Activated naive CD4-positive, alpha-beta T cell treated with anti-CD3 and anti-CD28 coated beads for 36 hours (primary cell): ENCODE measurements at regions of chr2 and their contacts with region 1.

Region 1: GRCh38 chr2:35973132-35973736 is 382.3 kb upstream of the CRIM1 start:
- DNase-seq: peak; percentile 33
- H3K4me3 Mint-ChIP-seq: no peak overlapping the region
- H3K27ac Mint-ChIP-seq: no peak overlapping the region
- H3K4me1 Mint-ChIP-seq: peaks cover 2% of the 10 kb centered on the region
- H3K27me3 Mint-ChIP-seq: peaks cover 4% of the 10 kb centered on the region

Region 2: DNA sequence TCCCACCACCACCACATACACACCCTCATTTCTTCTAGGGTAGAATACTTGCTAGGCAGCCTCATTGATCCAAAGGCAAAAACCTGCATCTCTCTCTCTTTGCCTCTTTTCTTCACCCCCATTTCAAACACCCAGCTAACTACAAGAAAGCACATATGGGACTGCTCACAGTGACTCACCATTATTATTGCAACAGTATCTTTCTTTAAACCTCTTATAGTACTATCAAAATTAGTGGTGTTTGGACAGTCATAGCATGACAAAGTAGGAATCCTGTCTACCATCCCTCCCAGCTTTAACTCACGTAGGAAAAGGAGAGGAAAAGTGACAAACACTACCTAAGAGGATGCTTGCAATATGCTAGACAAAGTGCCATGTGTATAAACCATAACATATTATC is 40.2 kb before region 1 on chr2:
- CTCF ChIA-PET with region 1: no interaction called
- intact Hi-C with region 1: no loop called
- DNase-seq: no peak
- H3K4me3 Mint-ChIP-seq: no peak overlapping the region
- H3K27ac Mint-ChIP-seq: no peak overlapping the region
- H3K4me1 Mint-ChIP-seq: no peaks in the 10 kb centered on the region
- H3K27me3 Mint-ChIP-seq: peaks cover 15% of the 10 kb centered on the region

Region 3: GRCh38 chr2:36322108-36322507 is 348.9 kb after region 1 on chr2:
- CTCF ChIA-PET with region 1: interaction called, 3 read pairs
- intact Hi-C with region 1: loop called (anchors 1 kb)
- DNase-seq: no peak
- H3K4me3 Mint-ChIP-seq: no peak overlapping the region
- H3K27ac Mint-ChIP-seq: no peak overlapping the region
- H3K4me1 Mint-ChIP-seq: no peaks in the 10 kb centered on the region
- H3K27me3 Mint-ChIP-seq: peaks cover 7% of the 10 kb centered on the region

Region 4: DNA sequence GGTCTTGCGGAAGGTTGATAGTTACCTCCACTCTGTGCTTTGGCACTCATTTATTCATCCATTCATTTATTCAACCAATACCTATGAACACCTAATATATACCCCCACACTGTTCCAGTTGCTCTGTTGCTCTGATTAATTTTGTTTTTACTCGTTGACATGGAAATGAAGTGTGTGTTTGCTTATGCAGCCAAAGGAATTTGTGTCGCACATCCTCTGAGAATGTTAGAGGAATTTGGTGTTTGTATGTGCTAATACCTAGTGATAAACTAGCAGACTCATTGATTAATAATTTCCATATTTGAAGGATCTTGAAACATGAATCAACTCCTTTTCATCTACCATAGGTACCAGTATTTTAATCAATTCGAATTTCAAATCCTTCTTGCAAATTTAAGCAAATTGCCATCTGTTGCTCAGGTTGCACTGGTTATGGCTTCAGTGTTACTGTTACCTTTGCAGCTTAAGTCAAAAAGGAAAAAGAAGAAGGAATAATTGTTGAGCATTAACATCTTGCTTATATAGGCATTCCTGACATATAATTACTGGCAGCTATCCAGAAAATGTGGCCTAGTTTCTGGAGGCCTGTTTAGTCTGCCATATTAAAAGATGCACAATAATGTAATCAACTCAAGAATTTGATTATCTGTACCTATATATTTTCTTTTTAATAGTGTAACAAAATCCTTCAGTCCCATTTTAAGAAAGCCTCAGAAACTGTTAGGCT is 356.7 kb after region 1 on chr2:
- CTCF ChIA-PET with region 1: no interaction called
- intact Hi-C with region 1: loop called (anchors 1 kb)
- DNase-seq: no peak
- H3K4me3 Mint-ChIP-seq: no peak overlapping the region
- H3K27ac Mint-ChIP-seq: no peak overlapping the region
- H3K4me1 Mint-ChIP-seq: peaks cover 2% of the 10 kb centered on the region
- H3K27me3 Mint-ChIP-seq: no peaks in the 10 kb centered on the region

Region 5: DNA sequence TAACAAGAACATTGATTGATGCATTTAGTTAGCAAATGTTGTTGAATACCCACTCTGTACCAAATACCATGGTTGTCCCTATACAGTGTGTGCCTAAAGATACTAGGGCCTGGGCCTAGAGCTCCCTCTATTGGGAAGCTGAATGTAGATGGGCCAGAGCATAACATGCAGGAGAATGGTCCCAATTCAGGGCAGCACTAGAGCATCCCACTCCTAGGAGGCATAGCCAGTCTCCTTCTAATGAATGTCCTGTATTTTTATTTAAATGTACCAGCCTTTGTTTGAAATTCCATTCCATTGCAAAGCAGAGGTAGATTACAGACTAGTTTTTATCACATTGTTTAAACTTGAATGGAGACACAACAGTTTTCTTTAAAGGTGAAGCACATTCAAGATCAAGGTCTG is 534.2 kb after region 1 on chr2:
- CTCF ChIA-PET with region 1: interaction called, 3 read pairs
- intact Hi-C with region 1: loop called (anchors 1 kb)
- DNase-seq: peak; percentile 68
- H3K4me3 Mint-ChIP-seq: no peak overlapping the region
- H3K27ac Mint-ChIP-seq: no peak overlapping the region
- H3K4me1 Mint-ChIP-seq: no peaks in the 10 kb centered on the region
- H3K27me3 Mint-ChIP-seq: no peaks in the 10 kb centered on the region

Region 6: GRCh38 chr2:36663851-36664695 is 690.8 kb after region 1 on chr2:
- CTCF ChIA-PET with region 1: no interaction called
- intact Hi-C with region 1: loop called (anchors 2 kb)
- DNase-seq: peak; percentile 22
- H3K4me3 Mint-ChIP-seq: no peak overlapping the region
- H3K27ac Mint-ChIP-seq: no peak overlapping the region
- H3K4me1 Mint-ChIP-seq: no peaks in the 10 kb centered on the region
- H3K27me3 Mint-ChIP-seq: peaks cover 2% of the 10 kb centered on the region